HepG2 (cell line): ENCODE measurements at regions of chr6 and their contacts with region 1.

Region 1: DNA sequence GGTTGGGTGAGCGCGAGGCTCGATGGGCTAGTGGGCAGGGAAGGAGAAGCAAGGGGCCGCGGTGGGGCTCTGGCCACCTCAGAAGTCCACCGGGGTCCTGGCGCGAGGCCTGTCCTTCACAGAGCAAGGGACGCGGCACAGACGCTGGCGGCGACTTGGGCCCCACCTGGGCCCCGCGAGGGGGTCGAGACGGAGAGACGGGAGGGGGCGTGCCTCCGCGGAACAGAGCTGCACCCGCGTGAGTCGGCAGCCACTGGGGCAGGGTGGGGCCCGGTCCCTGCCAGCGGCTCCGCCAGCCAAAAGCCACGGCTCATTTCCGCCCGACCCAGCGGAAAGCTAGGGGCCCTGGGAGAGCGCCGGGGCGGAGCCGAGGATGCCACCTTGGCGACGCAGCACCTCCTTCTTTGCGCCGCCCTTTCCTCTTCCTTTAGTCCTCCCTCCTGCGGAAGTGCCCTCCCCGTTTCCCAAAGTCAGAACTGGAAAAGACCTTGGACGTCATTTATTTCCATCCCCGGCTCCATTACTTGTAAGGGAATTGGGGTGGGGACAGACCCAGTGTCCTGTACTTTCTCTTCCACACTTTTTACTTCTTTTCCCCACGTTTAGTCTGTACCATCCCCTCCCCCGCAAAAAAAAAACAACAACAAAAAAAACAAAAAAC is at the start of gene CUL7:
- DNase-seq: peak; percentile 91
- ATAC-seq: peak; percentile 95
- H3K4me3 ChIP-seq: peak within 1 kb of the TSS; percentile 75 to 96 (median 94)
- H3K27ac ChIP-seq: peak within 1 kb of the TSS; percentile 84
- H3K4me1 ChIP-seq: peaks cover 49% of the 10 kb centered on the region
- H3K27me3 ChIP-seq: no peaks in the 10 kb centered on the region; a peak in 1 of 5 replicates
- CTCF ChIP-seq: no peak
- EP300 ChIP-seq: 0 out of 4 replicates have a peak, but pooled peaks of 1 of the 2 experiments have one; percentile 2
- POLR2A ChIP-seq: peak in 1 of 2 experiments; percentile 95; a peak in 2 of 4 replicates
- RAD21 ChIP-seq: peak; percentile 74
- total RNA-seq, gene CUL7: 30.7 and 32.0 TPM in 2 replicates

Region 2: DNA sequence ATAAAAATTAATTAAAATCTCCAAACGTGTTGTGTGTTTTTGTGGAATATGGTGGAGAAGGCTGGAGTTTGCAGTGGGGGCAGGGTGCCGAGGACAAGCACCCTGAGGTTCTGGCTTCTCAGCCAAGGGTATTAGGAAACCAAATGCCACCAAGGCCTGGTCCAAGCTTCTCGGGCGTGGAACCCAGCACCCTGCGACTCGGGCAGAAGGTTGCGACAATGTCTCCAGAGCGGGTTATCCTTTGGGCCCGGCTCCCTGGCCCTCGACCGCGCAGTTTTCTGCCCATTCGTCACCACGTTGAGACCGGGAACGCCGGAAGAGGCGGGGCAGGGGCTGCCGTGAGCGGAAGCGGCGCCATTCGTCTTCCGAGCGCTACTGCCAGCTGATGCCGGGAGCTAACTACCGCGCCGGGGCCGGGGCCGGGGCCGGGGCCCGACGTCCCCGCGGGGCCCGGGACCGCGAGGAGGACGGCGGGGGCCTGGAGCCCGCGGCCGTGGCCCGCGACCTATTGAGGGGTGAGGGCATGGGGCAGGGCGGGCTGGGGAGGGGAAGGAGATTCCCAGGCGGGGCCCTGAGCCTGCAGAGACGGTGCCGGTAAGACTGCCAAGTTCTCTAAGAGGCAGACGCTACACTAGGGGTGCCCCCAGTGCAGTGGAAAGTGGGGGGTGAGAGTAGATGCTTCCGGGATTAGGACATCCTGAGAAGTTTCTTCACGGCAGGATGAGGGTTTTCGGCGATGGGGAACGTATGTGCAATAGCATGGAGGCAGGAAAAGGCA is 32.2 kb before region 1 on chr6 and contains the start of gene RRP36:
- CTCF ChIA-PET with region 1: no interaction called
- POLR2A ChIA-PET with region 1: interaction called, 45 read pairs
- in situ Hi-C with region 1: no loop called
- intact Hi-C with region 1: no loop called
- DNase-seq: peak; percentile 74
- ATAC-seq: peak; percentile 96
- H3K4me3 ChIP-seq: peak within 1 kb of the TSS; percentile 100
- H3K27ac ChIP-seq: peak within 1 kb of the TSS; percentile 77
- H3K4me1 ChIP-seq: peaks cover 30% of the 10 kb centered on the region
- H3K27me3 ChIP-seq: peaks cover 0 to 3% of the 10 kb centered on the region in 2 experiments; a peak in 1 of 5 replicates
- CTCF ChIP-seq: 0 out of 2 replicates have a peak, but pooled peaks have one; percentile 10
- EP300 ChIP-seq: no peak
- POLR2A ChIP-seq: peak; percentile 83 to 87
- RAD21 ChIP-seq: peak; percentile 48; the same call in 1 of the 2 replicates
- total RNA-seq, gene RRP36: 144 and 184 TPM in 2 replicates

Region 3: GRCh38 chr6:43035495-43036194 is 18.0 kb before region 1 on chr6:
- CTCF ChIA-PET with region 1: no interaction called
- POLR2A ChIA-PET with region 1: interaction called, 19 read pairs
- in situ Hi-C with region 1: no loop called
- intact Hi-C with region 1: no loop called
- DNase-seq: no peak
- ATAC-seq: peak; percentile 86
- H3K4me3 ChIP-seq: peak overlapping the region in 1 of 3 experiments; percentile 3; a peak in 1 of 6 replicates
- H3K27ac ChIP-seq: peak overlapping the region; percentile 39
- H3K4me1 ChIP-seq: peaks cover 12% of the 10 kb centered on the region
- H3K27me3 ChIP-seq: no peaks in the 10 kb centered on the region
- CTCF ChIP-seq: no peak
- EP300 ChIP-seq: no peak
- POLR2A ChIP-seq: peak in 1 of 2 experiments; percentile 16; a peak in 1 of 4 replicates
- RAD21 ChIP-seq: no peak

Region 4: DNA sequence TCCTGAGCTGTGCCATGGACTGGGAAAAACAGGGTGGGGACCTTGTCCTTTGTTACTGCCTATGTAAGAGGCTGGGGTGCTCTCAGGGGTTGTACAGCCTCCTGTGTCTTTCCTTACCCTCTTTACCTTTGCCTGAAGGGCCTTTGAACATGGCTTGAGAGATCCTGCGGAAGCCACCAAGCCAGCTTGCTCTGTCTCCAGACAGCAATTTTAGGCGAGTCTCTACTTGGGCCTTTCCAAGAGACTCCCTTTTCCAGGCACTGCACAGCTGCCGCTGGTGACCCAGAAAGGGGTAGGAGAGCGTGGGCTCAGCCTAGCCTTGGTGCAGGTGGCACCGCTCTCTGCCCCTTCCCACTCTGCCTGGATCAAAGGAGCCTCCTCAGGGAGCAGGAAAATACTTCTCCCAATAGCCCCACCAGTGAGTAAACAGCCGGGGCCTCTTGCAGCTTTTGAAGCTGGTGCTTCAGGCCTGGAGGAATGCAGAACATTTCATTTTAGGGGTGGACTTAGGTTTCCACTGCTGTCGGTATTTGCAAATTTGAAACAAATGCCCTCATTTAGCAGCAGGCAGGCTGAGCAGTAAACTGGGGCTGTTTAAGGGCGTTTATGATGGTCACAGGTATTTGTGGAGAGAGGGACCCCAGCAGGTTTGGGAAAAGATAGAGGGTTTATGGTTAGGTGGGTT is 36.3 kb after region 1 on chr6:
- CTCF ChIA-PET with region 1: no interaction called
- POLR2A ChIA-PET with region 1: interaction called, 16 read pairs
- in situ Hi-C with region 1: no loop called
- intact Hi-C with region 1: no loop called
- DNase-seq: peak; percentile 95
- ATAC-seq: peak; percentile 84
- H3K4me3 ChIP-seq: peak overlapping the region; percentile 57 to 74 (median 57)
- H3K27ac ChIP-seq: peak overlapping the region; percentile 92
- H3K4me1 ChIP-seq: peaks cover 85% of the 10 kb centered on the region
- H3K27me3 ChIP-seq: no peaks in the 10 kb centered on the region
- CTCF ChIP-seq: no peak
- EP300 ChIP-seq: peak; percentile 88 to 96; a peak in 3 of 4 replicates
- POLR2A ChIP-seq: peak in 1 of 2 experiments; percentile 73; a peak in 2 of 4 replicates
- RAD21 ChIP-seq: no peak; the same call in 1 of the 2 replicates

Region 5: DNA sequence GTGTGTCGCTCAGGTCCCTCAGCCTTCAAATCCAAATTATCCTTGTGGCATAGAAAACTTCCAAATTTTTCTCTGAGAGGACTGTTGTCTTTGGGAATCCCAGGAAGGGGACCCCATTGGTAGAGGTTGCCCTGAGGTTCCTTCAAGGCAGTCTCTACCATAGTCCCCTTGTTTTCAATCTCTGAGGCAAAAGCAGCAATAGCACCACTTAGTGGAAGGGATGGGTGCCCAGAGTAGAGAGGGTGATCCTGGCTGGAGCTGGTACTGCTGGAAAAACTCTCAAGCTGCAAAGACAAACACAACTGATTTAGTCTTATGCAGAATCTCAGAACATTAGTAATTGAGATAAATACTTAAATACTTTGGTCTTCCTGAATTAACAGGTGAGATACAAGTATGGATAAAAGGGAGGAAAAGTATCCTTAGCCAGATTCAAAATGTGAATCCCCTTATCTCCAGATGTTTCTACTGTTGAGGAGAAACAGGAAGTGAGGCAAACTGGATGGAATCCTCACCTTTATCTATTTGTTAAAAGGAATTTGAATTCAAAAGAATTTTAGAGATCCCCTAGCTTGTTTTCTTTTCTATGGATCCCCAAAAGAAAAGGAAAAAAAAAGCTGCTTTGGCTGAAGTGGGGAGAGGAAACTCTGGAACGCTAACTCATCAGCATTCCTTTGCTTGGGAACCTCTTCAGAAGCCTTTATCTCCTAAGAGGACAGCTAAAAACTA is 302.4 kb after region 1 on chr6:
- CTCF ChIA-PET with region 1: no interaction called
- POLR2A ChIA-PET with region 1: no interaction called
- in situ Hi-C with region 1: no loop called
- intact Hi-C with region 1: no loop called
- DNase-seq: peak; percentile 64
- ATAC-seq: peak; percentile 99
- H3K4me3 ChIP-seq: no peak overlapping the region
- H3K27ac ChIP-seq: no peak overlapping the region
- H3K4me1 ChIP-seq: peaks cover 2% of the 10 kb centered on the region
- H3K27me3 ChIP-seq: no peaks in the 10 kb centered on the region
- CTCF ChIP-seq: peak; percentile 91
- EP300 ChIP-seq: no peak
- POLR2A ChIP-seq: no peak
- RAD21 ChIP-seq: peak; percentile 86